GM13976 (cell line): ENCODE measurements at regions of chr12 and their contacts with region 1.

Region 1: DNA sequence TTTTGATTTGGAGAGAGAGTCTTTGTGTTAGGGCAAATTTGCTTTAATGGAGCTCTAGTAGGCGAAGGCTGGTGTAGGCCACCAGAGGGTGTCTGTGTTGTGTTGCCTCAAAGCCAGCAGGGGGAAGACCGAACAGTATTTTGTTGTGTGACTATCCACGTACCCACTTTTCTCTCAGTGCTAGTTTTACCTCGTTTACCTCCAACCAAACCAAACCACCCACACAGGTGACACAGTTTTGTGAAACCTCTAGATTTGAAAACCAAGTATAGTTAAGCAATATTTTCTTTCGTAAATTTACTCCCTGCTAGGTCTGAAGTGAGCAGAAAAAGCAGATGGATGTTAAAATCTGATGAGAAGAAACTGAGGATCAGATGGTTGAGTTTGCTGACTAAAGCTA is 36.3 kb upstream of the NPFF start:
- DNase-seq: peak; percentile 78
- CTCF ChIP-seq: peak; percentile 85

Region 2: DNA sequence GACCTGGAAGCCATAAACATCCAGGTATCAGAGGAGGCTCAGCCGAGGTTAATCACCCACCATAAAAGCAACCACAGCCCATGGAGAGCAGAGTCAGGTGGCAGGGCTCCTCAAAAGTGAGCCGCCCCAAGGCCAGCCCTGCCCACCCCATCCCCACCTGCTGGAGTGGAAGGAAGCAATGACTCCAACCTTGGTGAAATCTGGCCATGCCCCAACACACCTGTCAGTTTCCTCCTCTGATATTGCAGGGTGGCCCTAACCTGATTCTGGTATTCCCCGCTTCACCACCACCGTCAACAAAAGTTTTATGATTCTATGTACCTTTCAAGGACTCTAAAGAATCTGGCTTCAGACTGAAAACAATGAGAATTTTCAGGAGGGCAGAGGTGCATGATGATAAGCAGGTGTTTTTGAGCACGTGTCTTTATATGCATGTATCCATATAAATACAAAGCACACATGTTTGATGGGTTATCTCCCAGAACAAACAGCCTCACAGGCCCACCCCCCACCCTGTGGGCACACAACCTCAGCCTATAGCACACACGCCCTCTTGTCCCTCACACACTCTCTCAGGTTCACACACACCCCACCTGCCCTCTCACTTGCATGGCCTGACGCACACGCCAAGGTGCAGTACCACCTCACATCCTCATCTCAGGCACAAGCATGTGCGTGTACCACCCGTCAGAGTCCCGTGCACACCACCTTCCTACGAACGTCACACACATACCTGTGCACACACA is 630.3 kb before region 1 on chr12:
- in situ Hi-C with region 1: no loop called
- DNase-seq: no peak
- CTCF ChIP-seq: no peak

Region 3: GRCh38 chr12:53220801-53221202 is 322.7 kb before region 1 on chr12:
- in situ Hi-C with region 1: no loop called
- DNase-seq: peak; percentile 96
- CTCF ChIP-seq: no peak

Region 4: GRCh38 chr12:53675651-53676453 is 132.3 kb after region 1 on chr12 and contains the start of gene ATP5MC2:
- in situ Hi-C with region 1: loop called (anchors 5 kb)
- DNase-seq: peak; percentile 99
- CTCF ChIP-seq: peak; percentile 99

Region 5: GRCh38 chr12:53746592-53747092 is 203.1 kb after region 1 on chr12:
- in situ Hi-C with region 1: loop called (anchors 10 kb)
- DNase-seq: peak; percentile 87
- CTCF ChIP-seq: peak; percentile 100

Region 6: DNA sequence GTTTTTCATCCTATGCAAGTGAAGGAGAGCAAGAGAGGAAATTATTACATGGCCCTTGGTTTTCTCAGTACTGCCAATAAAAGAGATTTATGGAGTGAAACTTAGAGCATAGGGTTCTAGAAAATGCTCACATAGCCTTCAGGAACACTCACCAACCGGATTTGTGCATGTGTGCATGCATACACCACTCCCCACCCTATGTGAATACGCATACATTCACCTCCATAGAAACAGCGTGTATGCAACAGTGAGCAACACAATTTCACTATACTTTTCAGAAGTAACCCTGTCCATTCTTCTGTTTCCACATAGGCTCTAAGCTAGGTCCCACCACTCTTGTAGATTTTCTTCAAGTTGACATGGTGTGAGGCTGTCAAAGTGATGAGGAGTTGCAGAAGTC is 363.6 kb after region 1 on chr12:
- in situ Hi-C with region 1: no loop called
- DNase-seq: no peak
- CTCF ChIP-seq: no peak